ENCODE measurements at regions of chr17 and their contacts with region 1.

Region 1: DNA sequence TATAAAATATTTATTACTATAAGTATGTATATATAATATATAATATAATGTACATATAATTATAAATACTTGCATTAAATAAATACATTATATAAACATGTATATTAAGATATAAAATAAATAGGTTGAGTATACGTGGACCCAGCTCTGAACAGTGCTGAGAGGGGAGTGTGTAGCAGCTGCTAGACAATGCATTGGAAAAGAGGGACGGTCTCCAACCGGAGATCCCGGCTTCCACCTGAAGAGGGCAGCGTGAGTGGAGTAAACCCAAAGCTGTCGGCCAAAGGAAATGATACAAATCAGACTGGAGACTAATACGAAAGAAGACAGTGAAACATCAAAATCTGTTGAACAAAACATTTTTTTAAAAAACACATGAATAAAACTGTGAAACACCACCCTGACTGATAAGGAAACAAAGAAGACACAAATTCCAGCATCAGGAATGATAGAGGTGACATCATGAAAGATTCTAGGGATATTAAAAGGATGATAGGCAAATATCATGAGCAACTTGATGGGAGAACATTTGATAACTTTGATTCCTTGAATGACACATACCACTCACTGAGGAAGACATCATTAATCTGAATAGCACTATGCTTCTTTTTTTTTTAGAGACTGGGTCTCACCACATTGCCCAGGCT is 125.4 kb upstream of the CHMP6 start:
- DNase-seq: peak; percentile 72
- H3K4me3 ChIP-seq: no peak overlapping the region
- H3K27ac ChIP-seq: no peak overlapping the region
- H3K4me1 ChIP-seq: no peaks in the 10 kb centered on the region
- H3K27me3 ChIP-seq: no peaks in the 10 kb centered on the region
- CTCF ChIP-seq: peak; percentile 71

Region 2: DNA sequence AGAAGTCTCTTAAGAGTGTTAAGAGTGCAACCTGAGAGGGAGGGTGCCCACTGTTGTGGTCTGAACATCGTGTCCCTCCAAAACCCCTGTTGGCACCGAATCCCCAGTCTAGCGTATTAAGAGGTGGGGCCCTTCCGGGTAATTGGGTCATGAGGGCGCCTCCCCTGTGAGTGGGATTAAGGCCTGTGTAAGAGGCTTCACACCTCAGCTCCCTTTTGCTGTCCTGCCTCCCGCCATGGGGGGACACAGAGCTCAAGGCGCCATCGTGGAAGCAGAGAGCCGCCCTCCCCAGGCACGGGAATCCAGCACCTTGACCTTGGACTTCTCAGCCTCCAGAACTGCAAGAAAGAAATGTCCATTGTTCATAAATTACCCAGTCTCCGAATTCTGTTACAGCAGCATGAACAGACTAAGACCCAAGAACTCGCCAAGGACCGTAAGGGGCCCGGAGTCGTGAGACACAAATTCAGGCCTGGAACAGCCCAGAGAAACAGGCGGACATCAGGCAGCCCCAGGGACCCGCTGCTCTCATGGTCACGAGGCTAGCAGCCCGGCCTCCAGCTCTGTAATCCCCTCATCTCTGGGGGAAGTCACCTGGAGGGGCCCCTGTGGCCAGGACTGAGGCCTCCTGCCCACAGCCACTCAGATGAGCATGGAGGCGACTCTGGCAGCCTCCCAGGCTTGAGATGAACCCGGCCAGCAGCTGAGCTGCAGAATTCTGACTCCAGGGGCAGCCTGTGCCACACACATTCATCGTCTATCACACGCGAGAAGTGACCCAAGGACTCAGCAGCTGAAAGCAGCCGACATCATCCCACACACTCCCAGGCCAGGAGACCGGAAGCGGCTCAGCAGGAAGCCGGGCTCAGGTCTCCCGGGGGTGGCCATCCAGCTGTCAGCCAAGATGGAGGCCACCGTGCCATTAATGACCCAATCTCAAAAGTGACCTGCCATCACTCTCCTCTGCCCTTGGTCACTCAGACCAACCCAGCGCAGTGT is 112.5 kb after region 1 on chr17:
- intact Hi-C with region 1: loop called (anchors 5 kb)
- DNase-seq: no peak
- H3K4me3 ChIP-seq: no peak overlapping the region
- H3K27ac ChIP-seq: no peak overlapping the region
- H3K4me1 ChIP-seq: no peaks in the 10 kb centered on the region
- H3K27me3 ChIP-seq: peaks cover 10% of the 10 kb centered on the region
- CTCF ChIP-seq: no peak

Region 3: GRCh38 chr17:80991645-80992076 is 125.4 kb after region 1 on chr17 and contains the start of gene CHMP6:
- intact Hi-C with region 1: no loop called
- DNase-seq: peak; percentile 72
- H3K4me3 ChIP-seq: peak within 1 kb of the TSS; percentile 91
- H3K27ac ChIP-seq: peak within 1 kb of the TSS; percentile 34
- H3K4me1 ChIP-seq: peaks cover 6% of the 10 kb centered on the region
- H3K27me3 ChIP-seq: no peaks in the 10 kb centered on the region
- CTCF ChIP-seq: no peak
- total RNA-seq, gene CHMP6: 29.1 to 43.5 TPM